ENCODE measurements at regions of chr15 and their contacts with region 1.

Region 1: GRCh38 chr15:63504247-63504978 is at the start of gene USP3:
- DNase-seq: peak; percentile 94
- H3K4me3 Mint-ChIP-seq: peak within 1 kb of the TSS; percentile 85
- H3K27ac Mint-ChIP-seq: peak within 1 kb of the TSS; percentile 97
- H3K4me1 Mint-ChIP-seq: peaks cover 78% of the 10 kb centered on the region
- H3K27me3 Mint-ChIP-seq: no peaks in the 10 kb centered on the region
- total RNA-seq, gene USP3: 49.9 to 52.2 TPM

Region 2: GRCh38 chr15:63466378-63467192 is 37.8 kb before region 1 on chr15:
- CTCF ChIA-PET with region 1: interaction called, 13 read pairs
- intact Hi-C with region 1: no loop called
- DNase-seq: peak; percentile 71
- H3K4me3 Mint-ChIP-seq: no peak overlapping the region
- H3K27ac Mint-ChIP-seq: no peak overlapping the region
- H3K4me1 Mint-ChIP-seq: peaks cover 23% of the 10 kb centered on the region
- H3K27me3 Mint-ChIP-seq: no peaks in the 10 kb centered on the region

Region 3: DNA sequence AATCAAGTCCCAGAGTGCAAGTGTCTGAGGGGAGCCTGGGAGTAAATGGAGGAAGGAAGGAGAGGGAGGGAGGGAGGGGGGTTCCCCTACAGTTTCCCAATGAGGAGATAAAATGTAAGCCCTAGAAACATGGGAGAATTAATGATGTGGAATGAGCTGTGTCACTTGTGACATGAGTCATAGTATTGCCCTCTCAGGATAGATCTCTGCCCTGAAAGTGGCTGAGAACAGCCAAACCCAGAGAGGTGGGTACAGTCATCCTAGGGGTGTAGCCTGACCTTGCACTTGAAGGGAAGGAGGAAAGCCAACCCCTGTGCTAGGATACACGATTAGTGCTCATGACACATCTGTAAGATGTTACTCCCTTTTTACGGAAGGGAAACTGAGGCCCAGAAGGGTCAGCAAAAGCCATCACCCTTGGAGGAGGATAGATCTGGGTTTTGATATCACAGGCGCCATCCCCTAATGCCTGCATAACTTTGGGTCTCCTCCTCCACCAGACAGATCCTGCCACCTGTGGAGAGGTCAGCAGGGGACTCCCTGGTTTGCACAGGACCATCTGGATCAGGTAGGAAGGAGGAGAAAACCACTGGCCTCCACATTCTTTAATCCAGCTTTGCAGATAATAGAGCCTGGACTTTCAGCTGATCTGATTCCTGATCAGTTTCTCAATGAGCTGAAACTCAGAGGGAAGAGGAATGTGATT is 23.2 kb before region 1 on chr15:
- CTCF ChIA-PET with region 1: interaction called, 16 read pairs
- intact Hi-C with region 1: loop called (anchors 1 kb)
- DNase-seq: peak; percentile 73
- H3K4me3 Mint-ChIP-seq: no peak overlapping the region
- H3K27ac Mint-ChIP-seq: peak overlapping the region; percentile 89
- H3K4me1 Mint-ChIP-seq: peaks cover 81% of the 10 kb centered on the region
- H3K27me3 Mint-ChIP-seq: no peaks in the 10 kb centered on the region

Region 4: GRCh38 chr15:63531586-63531985 is 27.2 kb after region 1 on chr15:
- CTCF ChIA-PET with region 1: interaction called, 4 read pairs
- intact Hi-C with region 1: loop called (anchors 1 kb)
- DNase-seq: no peak
- H3K4me3 Mint-ChIP-seq: no peak overlapping the region
- H3K27ac Mint-ChIP-seq: peak overlapping the region; percentile 69
- H3K4me1 Mint-ChIP-seq: peaks cover 86% of the 10 kb centered on the region
- H3K27me3 Mint-ChIP-seq: no peaks in the 10 kb centered on the region

Region 5: GRCh38 chr15:63833021-63833696 is 328.7 kb after region 1 on chr15:
- CTCF ChIA-PET with region 1: no interaction called
- intact Hi-C with region 1: loop called (anchors 2 kb)
- DNase-seq: peak; percentile 45
- H3K4me3 Mint-ChIP-seq: peak overlapping the region; percentile 98
- H3K27ac Mint-ChIP-seq: peak overlapping the region; percentile 72
- H3K4me1 Mint-ChIP-seq: peaks cover 49% of the 10 kb centered on the region
- H3K27me3 Mint-ChIP-seq: no peaks in the 10 kb centered on the region

Region 6: GRCh38 chr15:64622410-64623260 is 1118.2 kb after region 1 on chr15:
- CTCF ChIA-PET with region 1: no interaction called
- intact Hi-C with region 1: loop called (anchors 10 kb)
- DNase-seq: peak; percentile 71
- H3K4me3 Mint-ChIP-seq: peak overlapping the region; percentile 59
- H3K27ac Mint-ChIP-seq: peak overlapping the region; percentile 96
- H3K4me1 Mint-ChIP-seq: peaks cover 95% of the 10 kb centered on the region
- H3K27me3 Mint-ChIP-seq: no peaks in the 10 kb centered on the region